A673 (cell line): ENCODE measurements at regions of chr6 and their contacts with region 1.

Region 1: DNA sequence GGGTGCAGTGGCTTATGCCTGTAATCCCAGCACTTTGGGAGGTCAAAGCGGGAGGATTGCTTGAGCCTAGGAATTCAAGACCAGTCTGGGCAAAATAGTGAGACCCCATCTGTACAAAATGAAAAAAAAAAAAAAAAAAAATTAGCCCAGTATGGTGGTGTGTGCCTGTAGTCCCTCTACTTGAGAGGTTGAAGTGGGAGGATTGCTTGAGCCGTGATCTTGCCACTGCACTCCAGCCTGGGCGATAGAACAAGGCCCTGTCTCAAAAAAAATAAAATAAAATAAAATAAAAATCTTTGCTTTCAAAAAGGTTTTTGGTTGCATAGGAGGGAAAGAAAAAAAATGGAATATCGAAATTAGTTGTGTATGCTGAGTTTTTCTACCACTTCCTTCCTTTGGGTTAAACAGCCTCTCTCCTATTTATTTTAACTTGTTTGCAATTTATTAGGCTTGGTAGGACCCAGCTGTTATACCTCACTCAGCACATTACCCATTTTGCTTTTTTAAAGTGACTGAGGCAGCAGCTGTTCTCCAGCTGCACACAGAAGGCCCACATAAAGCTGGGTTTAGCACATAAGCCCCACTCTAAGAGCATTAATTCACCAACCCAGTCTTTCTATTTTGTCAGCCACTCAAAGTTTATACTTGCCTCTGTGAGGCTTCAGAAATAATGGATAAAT is 152.3 kb downstream of the ZFAND3 start:
- DNase-seq: peak; percentile 25
- H3K4me3 ChIP-seq: no peak overlapping the region
- H3K27ac ChIP-seq: peak overlapping the region; percentile 77
- H3K4me1 ChIP-seq: peaks cover 28% of the 10 kb centered on the region
- H3K27me3 ChIP-seq: no peaks in the 10 kb centered on the region
- CTCF ChIP-seq: no peak

Region 2: GRCh38 chr6:37988696-37989095 is 16.8 kb after region 1 on chr6:
- CTCF ChIA-PET with region 1: no interaction called
- POLR2A ChIA-PET with region 1: interaction called, 25 read pairs
- intact Hi-C with region 1: no loop called
- DNase-seq: no peak
- H3K4me3 ChIP-seq: no peak overlapping the region
- H3K27ac ChIP-seq: no peak overlapping the region
- H3K4me1 ChIP-seq: peaks cover 40% of the 10 kb centered on the region
- H3K27me3 ChIP-seq: no peaks in the 10 kb centered on the region
- CTCF ChIP-seq: no peak